ENCODE measurements at regions of chr12 and their contacts with region 1.

Region 1: GRCh38 chr12:10235761-10236631 is 23.3 kb downstream of the GABARAPL1 start:
- DNase-seq: peak; percentile 31
- ATAC-seq: peak; percentile 85
- H3K4me3 ChIP-seq: no peak overlapping the region
- H3K27ac ChIP-seq: no peak overlapping the region
- H3K4me1 ChIP-seq: no peaks in the 10 kb centered on the region
- H3K27me3 ChIP-seq: no peaks in the 10 kb centered on the region
- CTCF ChIP-seq: peak; percentile 73 to 79 (median 75)
- POLR2A ChIP-seq: no peak
- RAD21 ChIP-seq: peak; percentile 87

Region 2: GRCh38 chr12:10130042-10130441 is 106.0 kb before region 1 on chr12 and contains the start of gene CLEC7A:
- CTCF ChIA-PET with region 1: no interaction called
- POLR2A ChIA-PET with region 1: no interaction called
- RAD21 ChIA-PET with region 1: no interaction called
- intact Hi-C with region 1: no loop called
- DNase-seq: no peak
- ATAC-seq: no peak
- H3K4me3 ChIP-seq: no peak within 1 kb of the TSS
- H3K27ac ChIP-seq: no peak within 1 kb of the TSS
- H3K4me1 ChIP-seq: peaks cover 0 to 3% of the 10 kb centered on the region in 2 experiments; a peak in 1 of 4 replicates
- H3K27me3 ChIP-seq: peaks cover 11% of the 10 kb centered on the region
- CTCF ChIP-seq: no peak
- POLR2A ChIP-seq: no peak
- RAD21 ChIP-seq: no peak
- total RNA-seq, gene CLEC7A: not detected

Region 3: GRCh38 chr12:10501031-10501430 is 265.0 kb after region 1 on chr12:
- CTCF ChIA-PET with region 1: no interaction called
- POLR2A ChIA-PET with region 1: no interaction called
- RAD21 ChIA-PET with region 1: no interaction called
- intact Hi-C with region 1: loop called (anchors 2 kb)
- DNase-seq: peak; percentile 2
- ATAC-seq: no peak
- H3K4me3 ChIP-seq: no peak overlapping the region
- H3K27ac ChIP-seq: no peak overlapping the region
- H3K4me1 ChIP-seq: no peaks in the 10 kb centered on the region
- H3K27me3 ChIP-seq: no peaks in the 10 kb centered on the region
- CTCF ChIP-seq: peak in 2 of 3 experiments; percentile 33 to 60; a peak in 3 of 6 replicates
- POLR2A ChIP-seq: no peak
- RAD21 ChIP-seq: peak; percentile 80

Region 4: GRCh38 chr12:10590966-10591365 is 355.0 kb after region 1 on chr12:
- CTCF ChIA-PET with region 1: no interaction called
- POLR2A ChIA-PET with region 1: no interaction called
- RAD21 ChIA-PET with region 1: no interaction called
- intact Hi-C with region 1: no loop called
- DNase-seq: no peak
- ATAC-seq: no peak
- H3K4me3 ChIP-seq: no peak overlapping the region
- H3K27ac ChIP-seq: no peak overlapping the region
- H3K4me1 ChIP-seq: no peaks in the 10 kb centered on the region
- H3K27me3 ChIP-seq: no peaks in the 10 kb centered on the region
- CTCF ChIP-seq: no peak
- POLR2A ChIP-seq: no peak
- RAD21 ChIP-seq: no peak

Region 5: GRCh38 chr12:11202811-11203210 is 966.8 kb after region 1 on chr12:
- CTCF ChIA-PET with region 1: no interaction called
- POLR2A ChIA-PET with region 1: no interaction called
- RAD21 ChIA-PET with region 1: no interaction called
- intact Hi-C with region 1: loop called (anchors 10 kb)
- DNase-seq: no peak
- ATAC-seq: no peak
- H3K4me3 ChIP-seq: no peak overlapping the region
- H3K27ac ChIP-seq: no peak overlapping the region
- H3K4me1 ChIP-seq: no peaks in the 10 kb centered on the region
- H3K27me3 ChIP-seq: no peaks in the 10 kb centered on the region
- CTCF ChIP-seq: no peak
- POLR2A ChIP-seq: no peak
- RAD21 ChIP-seq: no peak